ENCODE measurements at regions of chr9 and their contacts with region 1.

Region 1: DNA sequence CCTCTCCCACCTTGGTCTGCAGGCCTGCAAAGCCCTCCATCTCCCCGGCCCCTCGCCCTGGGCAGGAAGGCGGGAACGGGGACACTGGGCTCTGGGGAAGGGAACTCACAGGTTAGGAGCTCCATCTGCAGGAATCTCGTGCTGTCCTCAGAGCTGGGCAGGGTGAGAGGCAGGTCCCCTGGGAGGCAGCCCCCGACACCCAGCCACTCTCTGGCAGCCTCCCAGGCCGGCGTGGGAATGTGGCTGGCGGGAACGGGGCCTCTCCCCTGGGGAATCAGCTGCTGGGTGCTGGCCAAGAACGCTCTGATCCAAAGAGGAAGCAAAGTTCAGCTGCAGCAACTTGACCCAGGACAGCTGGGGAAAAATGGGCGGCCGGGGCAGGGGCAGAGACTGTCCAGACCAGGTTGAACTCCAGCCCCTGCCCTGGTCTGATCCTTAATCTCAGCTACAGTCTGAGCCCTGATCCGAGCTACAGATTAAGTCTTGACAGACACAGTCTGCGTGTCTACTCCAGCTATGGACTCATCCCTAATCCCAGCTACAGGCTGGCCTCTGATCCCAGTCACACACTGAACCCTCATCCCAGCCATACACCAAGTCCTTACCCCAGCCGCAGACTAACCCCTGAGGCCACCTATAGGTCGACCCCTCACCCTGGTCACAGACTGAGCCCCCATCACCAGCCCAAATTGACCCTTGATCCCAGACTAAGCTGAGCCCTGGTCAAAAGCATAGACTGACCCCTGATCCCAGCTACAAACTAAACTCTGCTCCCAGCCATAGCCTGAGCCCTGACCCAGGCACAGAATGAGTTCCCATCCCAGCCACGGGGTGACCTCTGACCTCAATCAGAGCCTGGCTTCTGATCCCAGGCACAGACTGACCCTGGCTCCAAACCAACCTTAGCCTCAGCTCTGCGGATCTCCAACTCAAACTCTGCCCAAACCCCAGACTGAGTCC is 37.3 kb upstream of the EGFL7 start:
- DNase-seq: peak; percentile 64 to 74
- H3K4me3 ChIP-seq: no peak overlapping the region
- H3K4me3 Mint-ChIP-seq: no peak overlapping the region
- H3K27ac Mint-ChIP-seq: no peak overlapping the region
- H3K4me1 ChIP-seq: peaks cover 50% of the 10 kb centered on the region
- H3K4me1 Mint-ChIP-seq: peaks cover 12% of the 10 kb centered on the region
- H3K27me3 ChIP-seq: no peaks in the 10 kb centered on the region
- H3K27me3 Mint-ChIP-seq: peaks cover 7% of the 10 kb centered on the region
- CTCF ChIP-seq: peak; percentile 18 to 46

Region 2: DNA sequence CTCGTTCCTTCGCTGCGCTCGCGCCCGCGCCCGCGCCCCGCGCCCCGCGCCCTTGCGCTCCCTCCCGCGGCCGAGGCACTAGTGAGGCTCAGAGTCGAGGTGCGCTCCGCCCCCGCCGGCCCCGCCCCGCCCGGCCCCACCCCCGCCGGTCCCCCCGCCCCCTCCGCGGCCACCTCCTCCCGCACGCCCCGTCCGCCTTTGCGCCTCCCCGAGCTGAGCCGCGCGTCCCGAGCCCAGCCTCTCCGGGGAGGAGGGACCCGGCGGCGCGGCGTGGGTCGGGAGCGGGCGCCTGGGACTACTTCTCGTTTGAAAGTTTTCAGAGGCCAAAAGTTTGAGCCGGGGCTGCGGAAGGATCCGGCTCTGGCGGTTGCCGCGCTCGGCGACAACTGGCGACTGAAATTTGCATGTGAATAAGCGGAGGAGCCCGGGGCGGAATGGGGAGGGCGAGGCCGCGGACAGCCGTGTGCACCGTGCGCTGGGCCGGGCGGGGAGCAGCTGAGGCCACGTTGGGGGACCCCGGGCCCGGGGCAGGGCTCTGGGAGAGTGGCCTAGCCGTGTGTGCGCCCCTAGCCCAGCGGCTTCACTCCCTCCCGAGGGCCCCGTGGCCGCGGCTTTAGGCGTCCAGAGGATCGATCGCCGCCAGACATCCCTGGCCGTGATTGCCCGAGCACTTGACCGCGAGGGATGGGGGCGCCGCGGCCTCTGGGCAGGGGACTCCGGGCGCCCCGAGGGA is 79.2 kb before region 1 on chr9 and contains the start of gene NOTCH1:
- CTCF ChIA-PET with region 1: interaction called, 7 read pairs
- POLR2A ChIA-PET with region 1: no interaction called
- intact Hi-C with region 1: loop called (anchors 2 kb)
- DNase-seq: peak; percentile 88 to 89
- H3K4me3 ChIP-seq: peak within 1 kb of the TSS; percentile 53
- H3K4me3 Mint-ChIP-seq: peak within 1 kb of the TSS; percentile 80
- H3K27ac Mint-ChIP-seq: peak within 1 kb of the TSS; percentile 51
- H3K4me1 ChIP-seq: peaks cover 24% of the 10 kb centered on the region
- H3K4me1 Mint-ChIP-seq: peaks cover under 1% of the 10 kb centered on the region
- H3K27me3 ChIP-seq: no peaks in the 10 kb centered on the region
- H3K27me3 Mint-ChIP-seq: no peaks in the 10 kb centered on the region
- CTCF ChIP-seq: no peak
- total RNA-seq, gene NOTCH1: 5.5 and 6.3 TPM in 2 replicates

Region 3: GRCh38 chr9:136645903-136646754 is 20.7 kb after region 1 on chr9:
- CTCF ChIA-PET with region 1: no interaction called
- POLR2A ChIA-PET with region 1: no interaction called
- intact Hi-C with region 1: no loop called
- DNase-seq: peak in 1 of 2 experiments; percentile 31
- H3K4me3 ChIP-seq: no peak overlapping the region
- H3K4me3 Mint-ChIP-seq: no peak overlapping the region
- H3K27ac Mint-ChIP-seq: no peak overlapping the region
- H3K4me1 ChIP-seq: peaks cover 13% of the 10 kb centered on the region
- H3K4me1 Mint-ChIP-seq: no peaks in the 10 kb centered on the region
- H3K27me3 ChIP-seq: no peaks in the 10 kb centered on the region
- H3K27me3 Mint-ChIP-seq: no peaks in the 10 kb centered on the region
- CTCF ChIP-seq: no peak

Region 4: DNA sequence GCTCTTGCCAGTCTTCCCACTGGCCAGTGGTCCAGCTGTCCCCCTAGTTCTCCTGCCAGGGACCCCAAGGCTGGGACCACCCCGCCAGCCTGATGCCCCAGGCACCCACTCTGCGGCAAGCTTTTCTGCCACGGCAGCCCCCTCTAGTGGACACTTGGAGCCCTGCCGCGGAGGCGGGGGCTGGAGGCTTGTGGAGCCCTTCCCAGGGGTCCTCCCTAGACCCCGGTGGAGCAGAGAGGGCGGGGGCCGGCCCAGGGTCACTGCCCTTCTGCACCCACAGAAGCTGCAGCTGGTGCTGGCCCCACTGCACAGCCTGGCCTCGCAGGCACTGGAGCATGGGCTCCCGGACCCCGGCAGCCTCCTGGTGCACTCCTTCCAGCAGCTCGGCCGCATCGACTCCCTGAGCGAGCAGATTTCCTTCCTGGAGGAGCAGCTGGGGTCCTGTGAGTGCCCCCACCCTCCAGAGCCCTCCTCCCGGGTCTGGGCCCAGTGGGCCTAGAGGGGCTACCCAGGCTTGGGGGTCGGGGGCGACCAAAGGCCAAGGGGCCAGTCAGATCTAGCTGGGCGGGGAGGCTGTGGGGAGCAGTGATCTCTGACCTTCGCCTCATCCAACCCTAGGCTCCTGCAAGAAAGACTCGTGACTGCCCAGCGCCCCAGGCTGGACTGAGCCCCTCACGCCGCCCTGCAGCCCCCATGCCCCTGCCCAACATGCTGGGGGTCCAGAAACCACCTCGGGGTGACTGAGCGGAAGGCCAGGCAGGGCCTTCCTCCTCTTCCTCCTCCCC is 46.5 kb after region 1 on chr9:
- CTCF ChIA-PET with region 1: interaction called, 10 read pairs
- POLR2A ChIA-PET with region 1: no interaction called
- intact Hi-C with region 1: no loop called
- DNase-seq: peak in 1 of 2 experiments; percentile 64
- H3K4me3 ChIP-seq: no peak overlapping the region
- H3K4me3 Mint-ChIP-seq: no peak overlapping the region
- H3K27ac Mint-ChIP-seq: no peak overlapping the region
- H3K4me1 ChIP-seq: peaks cover 19% of the 10 kb centered on the region
- H3K4me1 Mint-ChIP-seq: no peaks in the 10 kb centered on the region
- H3K27me3 ChIP-seq: no peaks in the 10 kb centered on the region
- H3K27me3 Mint-ChIP-seq: no peaks in the 10 kb centered on the region
- CTCF ChIP-seq: peak; percentile 76 to 83

Measured in Caco-2 (cell line).